Posterior vena cava (tissue), 2 donors: ENCODE measurements at regions of chr21 and their contacts with region 1.

Region 1: GRCh38 chr21:32306021-32306780 is 7.5 kb downstream of the MRAP start:
- DNase-seq: peak; percentile 46

Region 2: DNA sequence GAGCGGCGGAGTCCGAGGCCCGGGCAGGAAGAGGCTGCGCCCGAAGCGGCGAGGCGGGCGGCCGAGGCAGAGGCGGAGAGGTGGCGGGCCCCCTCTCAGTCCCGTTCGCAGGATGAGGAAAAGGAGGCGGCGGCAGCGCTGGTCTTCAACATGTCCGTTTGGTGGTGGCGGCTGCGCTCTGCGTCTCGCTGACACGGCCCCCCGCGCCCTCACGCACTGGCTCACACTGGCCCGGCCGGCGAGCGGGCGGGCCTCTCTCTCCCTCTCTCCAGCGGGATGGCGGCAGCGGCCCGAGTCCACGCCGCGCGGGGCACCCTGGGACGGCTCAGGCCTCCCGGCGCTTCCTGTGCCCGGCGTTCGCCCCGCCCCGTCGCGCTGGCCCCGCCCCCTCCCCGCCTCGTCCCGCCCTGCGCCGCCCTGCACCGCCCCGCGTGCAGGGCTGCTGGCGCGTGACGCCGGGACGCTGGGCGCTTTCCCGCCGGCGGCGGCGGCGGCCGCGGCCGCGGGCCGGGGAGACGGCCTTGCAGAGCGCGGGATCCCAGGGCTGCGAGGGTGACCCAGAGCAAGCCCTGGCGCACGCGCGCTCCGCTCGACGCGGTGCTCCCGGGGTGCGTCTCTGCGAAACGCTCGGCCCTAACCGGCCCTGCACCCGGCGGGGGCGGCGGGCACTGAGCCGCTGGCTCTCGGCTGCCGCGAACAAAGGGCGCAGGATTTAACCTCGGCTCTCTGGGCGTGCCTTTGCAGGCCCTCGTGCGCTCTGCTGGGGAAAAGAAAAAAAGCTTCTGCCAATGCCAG is 574.2 kb before region 1 on chr21 and contains the start of gene SCAF4:
- intact Hi-C with region 1: no loop called
- DNase-seq: peak; percentile 97
- total RNA-seq, gene SCAF4: 22.3 to 26.4 TPM

Region 3: GRCh38 chr21:32562426-32562825 is 256.2 kb after region 1 on chr21:
- intact Hi-C with region 1: no loop called
- DNase-seq: no peak

Region 4: GRCh38 chr21:34243562-34243961 is 1937.4 kb after region 1 on chr21:
- intact Hi-C with region 1: loop called in 1 of 2 experiments (anchors 5 kb)
- DNase-seq: no peak